ENCODE measurements at regions of chr12 and their contacts with region 1.

Region 1: DNA sequence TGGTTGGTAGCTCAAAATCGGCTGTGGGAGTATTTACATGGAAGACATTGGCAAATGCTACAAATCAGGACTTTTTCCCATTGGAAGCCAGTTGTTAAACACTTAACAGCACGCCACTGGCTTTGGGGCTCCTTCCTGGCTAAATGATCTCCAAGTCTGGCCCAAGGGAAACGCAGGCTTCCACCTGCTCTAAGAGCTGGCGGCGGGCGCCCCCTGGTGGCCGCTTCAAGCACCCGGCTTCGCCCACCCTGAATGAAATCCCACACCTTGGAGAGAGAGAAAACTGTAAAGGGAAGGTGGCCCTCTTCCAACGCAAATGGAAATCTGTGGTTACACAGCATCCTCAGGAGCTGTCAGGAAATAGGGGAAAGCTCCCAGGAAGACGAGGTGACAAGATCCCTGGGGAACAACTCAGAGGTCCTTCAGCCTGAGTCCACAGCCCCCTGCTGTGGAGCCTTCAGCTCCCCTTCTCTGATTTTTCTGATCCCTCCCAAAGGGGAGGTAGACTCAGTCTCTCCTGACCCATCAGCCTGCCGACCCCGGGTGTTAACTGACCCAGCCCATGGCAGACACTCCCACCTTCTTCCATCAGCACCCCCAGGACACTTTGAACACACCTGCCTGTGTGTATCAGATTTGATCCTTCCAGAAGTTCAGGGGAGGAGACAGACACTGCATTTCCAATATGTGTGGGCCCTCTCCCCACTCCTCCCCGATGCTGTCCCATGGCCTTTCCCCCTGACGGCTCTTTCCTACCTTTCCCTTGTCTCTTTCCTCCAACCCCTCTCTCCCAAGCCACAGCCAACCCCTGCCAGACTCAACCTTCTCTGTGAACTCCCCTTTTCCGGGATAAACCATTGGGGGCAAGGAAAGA is 15.4 kb downstream of the SELPLG start:
- DNase-seq: peak; percentile 70 to 95
- H3K4me3 ChIP-seq: no peak overlapping the region
- H3K27ac ChIP-seq: no peak overlapping the region
- H3K4me1 ChIP-seq: peaks cover 0 to 5% (median 4%) of the 10 kb centered on the region in 4 experiments; a peak in 4 of 7 replicates
- H3K27me3 ChIP-seq: no peaks in the 10 kb centered on the region
- CTCF ChIP-seq: peak; percentile 78 to 93 (median 89)
- EP300 ChIP-seq: no peak
- POLR2A ChIP-seq: no peak
- RAD21 ChIP-seq: peak; percentile 98 to 99

Region 2: GRCh38 chr12:108562348-108563135 is 55.8 kb before region 1 on chr12 and contains the start of gene ISCU:
- CTCF ChIA-PET with region 1: interaction called, 523 read pairs
- POLR2A ChIA-PET with region 1: interaction called, 14 read pairs
- DNase-seq: peak; percentile 96 to 100
- H3K4me3 ChIP-seq: peak within 1 kb of the TSS; percentile 84 to 100 (median 94)
- H3K27ac ChIP-seq: peak within 1 kb of the TSS; percentile 99
- H3K4me1 ChIP-seq: peaks cover 0 to 4% (median 0%) of the 10 kb centered on the region in 4 experiments; a peak in 1 of 7 replicates
- H3K27me3 ChIP-seq: no peaks in the 10 kb centered on the region
- CTCF ChIP-seq: no peak
- EP300 ChIP-seq: no peak
- POLR2A ChIP-seq: peak; percentile 85 to 94
- RAD21 ChIP-seq: no peak
- total RNA-seq, gene ISCU: 78.1 and 82.3 TPM in 2 replicates

Region 3: DNA sequence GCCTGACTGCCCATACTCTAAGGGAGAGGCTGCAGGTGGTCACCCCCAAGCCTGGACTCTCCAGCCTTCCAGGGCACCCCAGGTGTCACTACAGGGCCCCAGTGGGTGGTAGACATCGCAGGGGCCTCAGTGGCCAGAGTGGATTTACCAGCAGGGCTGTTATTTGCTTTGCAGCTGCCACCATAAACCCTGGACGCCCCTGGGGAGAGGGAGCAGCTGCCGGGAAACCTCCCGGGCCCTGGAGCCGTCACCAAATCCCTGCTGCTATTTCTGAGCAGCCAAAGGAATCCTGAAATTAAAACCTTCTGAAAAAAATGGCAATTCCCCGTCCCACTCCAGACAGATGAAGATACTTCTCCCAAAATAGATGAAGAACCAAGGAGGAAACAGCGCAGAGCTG is 34.3 kb before region 1 on chr12:
- CTCF ChIA-PET with region 1: interaction called, 32 read pairs
- POLR2A ChIA-PET with region 1: no interaction called
- DNase-seq: no peak
- H3K4me3 ChIP-seq: no peak overlapping the region
- H3K27ac ChIP-seq: no peak overlapping the region
- H3K4me1 ChIP-seq: peaks cover 0 to 6% (median 2%) of the 10 kb centered on the region in 4 experiments; a peak in 5 of 7 replicates
- H3K27me3 ChIP-seq: no peaks in the 10 kb centered on the region
- CTCF ChIP-seq: no peak
- EP300 ChIP-seq: no peak
- POLR2A ChIP-seq: no peak
- RAD21 ChIP-seq: no peak

Region 4: DNA sequence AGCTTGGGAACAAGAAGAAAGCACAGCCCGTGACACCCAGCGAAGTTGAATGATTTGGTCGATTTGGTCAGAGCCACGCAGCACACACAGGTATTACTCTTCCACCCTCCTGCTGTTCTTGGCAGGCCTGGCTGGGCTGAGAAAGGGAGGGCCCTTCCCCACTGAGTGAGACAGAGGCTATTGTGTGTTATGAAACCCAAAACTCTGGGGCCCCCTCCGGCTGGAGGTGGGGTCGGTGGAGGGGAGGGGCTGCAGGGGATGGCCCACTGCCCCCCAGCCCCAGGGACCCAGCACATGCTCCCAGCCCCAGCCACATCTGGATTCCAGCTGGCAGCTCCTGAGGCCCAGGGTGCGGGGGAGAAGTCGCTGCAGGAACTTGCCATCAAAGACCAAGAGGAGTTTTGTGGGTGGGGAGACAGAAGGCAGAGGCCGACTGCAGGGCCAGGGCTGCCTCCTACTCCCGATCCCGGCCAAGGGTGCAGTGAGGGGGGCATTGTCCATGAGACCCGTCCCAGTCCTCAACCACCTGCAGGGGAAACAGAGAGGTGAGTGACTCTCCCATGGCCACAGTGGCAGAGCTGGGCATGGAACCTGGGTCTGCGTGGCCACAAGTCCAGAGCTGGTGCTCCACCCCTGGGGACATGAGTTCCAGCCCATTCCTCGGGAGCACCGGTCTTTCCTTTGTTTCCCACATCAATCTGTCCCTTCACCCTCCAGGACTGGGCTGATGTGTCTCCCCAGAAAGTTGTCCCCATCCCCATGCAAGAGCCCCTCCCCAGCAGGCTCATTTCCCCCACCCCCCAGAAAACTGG is 29.1 kb before region 1 on chr12:
- CTCF ChIA-PET with region 1: interaction called, 32 read pairs
- POLR2A ChIA-PET with region 1: interaction called, 5 read pairs
- DNase-seq: no peak
- H3K4me3 ChIP-seq: no peak overlapping the region
- H3K27ac ChIP-seq: peak overlapping the region; percentile 22; the same call in 1 of the 2 replicates
- H3K4me1 ChIP-seq: peaks cover 0 to 17% (median 11%) of the 10 kb centered on the region in 4 experiments; a peak in 6 of 7 replicates
- H3K27me3 ChIP-seq: no peaks in the 10 kb centered on the region
- CTCF ChIP-seq: no peak
- EP300 ChIP-seq: no peak
- POLR2A ChIP-seq: no peak
- RAD21 ChIP-seq: no peak

Region 5: GRCh38 chr12:108597559-108598471 is 20.5 kb before region 1 on chr12 and contains the start of gene TMEM119:
- CTCF ChIA-PET with region 1: interaction called, 63 read pairs
- POLR2A ChIA-PET with region 1: interaction called, 5 read pairs
- DNase-seq: no peak
- H3K4me3 ChIP-seq: no peak within 1 kb of the TSS
- H3K27ac ChIP-seq: no peak within 1 kb of the TSS
- H3K4me1 ChIP-seq: peaks cover 0 to 14% (median 0%) of the 10 kb centered on the region in 4 experiments; a peak in 3 of 7 replicates
- H3K27me3 ChIP-seq: no peaks in the 10 kb centered on the region; a peak in 1 of 7 replicates
- CTCF ChIP-seq: no peak
- EP300 ChIP-seq: no peak
- POLR2A ChIP-seq: no peak
- RAD21 ChIP-seq: no peak
- total RNA-seq, gene TMEM119: 0.48 and 0.61 TPM in 2 replicates

Region 6: GRCh38 chr12:108633534-108634248 is 15.4 kb after region 1 on chr12 and contains the start of gene SELPLG:
- CTCF ChIA-PET with region 1: interaction called, 90 read pairs
- POLR2A ChIA-PET with region 1: interaction called, 9 read pairs
- DNase-seq: no peak
- H3K4me3 ChIP-seq: no peak within 1 kb of the TSS
- H3K27ac ChIP-seq: no peak within 1 kb of the TSS
- H3K4me1 ChIP-seq: peaks cover 15 to 38% (median 19%) of the 10 kb centered on the region in 4 experiments
- H3K27me3 ChIP-seq: no peaks in the 10 kb centered on the region
- CTCF ChIP-seq: no peak
- EP300 ChIP-seq: no peak
- POLR2A ChIP-seq: no peak
- RAD21 ChIP-seq: no peak
- total RNA-seq, gene SELPLG: 0.13 TPM in 1 of 2 replicates, not detected in the other

Region 7: DNA sequence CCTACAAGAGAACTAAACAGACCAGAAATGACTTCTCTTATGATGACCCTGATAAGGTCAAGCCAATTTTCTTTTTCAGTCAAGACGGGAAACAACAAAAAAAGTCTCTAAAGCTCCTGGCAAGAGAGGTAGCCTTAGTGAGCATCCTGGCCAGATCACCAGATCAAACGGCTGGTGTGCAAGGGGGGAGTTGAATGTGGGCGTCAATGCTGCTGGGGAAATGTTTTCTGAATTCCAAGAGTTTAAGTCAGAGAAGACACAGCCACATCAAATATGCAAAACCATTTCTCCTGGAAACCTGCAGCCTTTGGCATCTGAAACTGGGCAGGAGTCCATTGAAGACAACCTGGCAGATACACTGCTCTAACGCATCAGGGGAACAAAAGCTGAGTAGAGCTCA is 31.4 kb after region 1 on chr12:
- CTCF ChIA-PET with region 1: interaction called, 24 read pairs
- POLR2A ChIA-PET with region 1: no interaction called
- DNase-seq: no peak
- H3K4me3 ChIP-seq: no peak overlapping the region
- H3K27ac ChIP-seq: no peak overlapping the region
- H3K4me1 ChIP-seq: peaks cover 3 to 14% (median 8%) of the 10 kb centered on the region in 4 experiments; a peak in 6 of 7 replicates
- H3K27me3 ChIP-seq: no peaks in the 10 kb centered on the region
- CTCF ChIP-seq: no peak
- EP300 ChIP-seq: no peak
- POLR2A ChIP-seq: no peak
- RAD21 ChIP-seq: no peak

Region 8: GRCh38 chr12:108876550-108876949 is 258.2 kb after region 1 on chr12:
- CTCF ChIA-PET with region 1: no interaction called
- POLR2A ChIA-PET with region 1: no interaction called
- DNase-seq: no peak
- H3K4me3 ChIP-seq: no peak overlapping the region
- H3K27ac ChIP-seq: no peak overlapping the region
- H3K4me1 ChIP-seq: peaks cover 0 to 5% (median 4%) of the 10 kb centered on the region in 4 experiments; a peak in 4 of 7 replicates
- H3K27me3 ChIP-seq: no peaks in the 10 kb centered on the region
- CTCF ChIP-seq: no peak
- EP300 ChIP-seq: no peak
- POLR2A ChIP-seq: no peak
- RAD21 ChIP-seq: no peak

Region 9: GRCh38 chr12:108890212-108890611 is 271.9 kb after region 1 on chr12:
- CTCF ChIA-PET with region 1: no interaction called
- POLR2A ChIA-PET with region 1: no interaction called
- DNase-seq: peak in 1 of 2 experiments; percentile 55
- H3K4me3 ChIP-seq: no peak overlapping the region
- H3K27ac ChIP-seq: no peak overlapping the region
- H3K4me1 ChIP-seq: no peaks in the 10 kb centered on the region
- H3K27me3 ChIP-seq: no peaks in the 10 kb centered on the region
- CTCF ChIP-seq: no peak
- EP300 ChIP-seq: no peak
- POLR2A ChIP-seq: no peak
- RAD21 ChIP-seq: no peak